Psoas muscle (tissue), 8 donors: ENCODE measurements at regions of chr5 and their contacts with region 1.

Region 1: GRCh38 chr5:137870647-137871339 is 3.1 kb downstream of the MYOT start:
- DNase-seq: peak in 1 of 2 donors; percentile 82
- ATAC-seq: peak; percentile 40 to 69 (median 58)
- H3K4me3 ChIP-seq: peak overlapping the region; percentile 73
- H3K27ac ChIP-seq: peak overlapping the region; percentile 89
- H3K4me1 ChIP-seq: peaks cover 32% of the 10 kb centered on the region
- H3K27me3 ChIP-seq: no peaks in the 10 kb centered on the region
- CTCF ChIP-seq: no peak

Region 2: DNA sequence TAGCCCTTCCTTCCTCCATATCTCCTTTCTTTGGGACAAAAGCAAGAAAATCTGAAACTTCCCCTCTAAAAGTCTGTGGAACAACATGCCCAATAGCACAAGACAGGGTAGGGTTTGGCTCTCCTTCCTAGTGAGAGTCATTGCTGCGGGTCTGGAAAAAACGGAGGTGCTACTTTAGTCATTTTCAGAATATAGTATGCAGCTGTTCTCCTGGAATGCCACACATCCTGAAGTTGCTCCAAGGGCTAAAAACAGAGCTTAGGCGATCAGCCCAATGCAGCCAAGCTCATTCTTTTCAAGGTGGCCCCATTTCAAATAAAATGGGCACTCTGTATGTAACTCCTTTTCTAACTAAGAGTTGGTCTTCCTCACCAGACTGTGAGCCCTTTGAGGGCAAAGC is 42.6 kb before region 1 on chr5:
- intact Hi-C with region 1: loop called in 1 of 2 experiments (anchors 2 kb)
- DNase-seq: peak in 1 of 2 donors; percentile 60
- ATAC-seq: peak; percentile 93 to 95 (median 95)
- H3K4me3 ChIP-seq: peak overlapping the region; percentile 37
- H3K27ac ChIP-seq: peak overlapping the region; percentile 94
- H3K4me1 ChIP-seq: peaks cover 32% of the 10 kb centered on the region
- H3K27me3 ChIP-seq: no peaks in the 10 kb centered on the region
- CTCF ChIP-seq: no peak

Region 3: GRCh38 chr5:137836997-137837396 is 33.8 kb before region 1 on chr5:
- intact Hi-C with region 1: loop called (anchors 2 to 5 kb)
- DNase-seq: no peak
- ATAC-seq: peak; percentile 79 to 83 (median 82)
- H3K4me3 ChIP-seq: peak overlapping the region; percentile 51
- H3K27ac ChIP-seq: peak overlapping the region; percentile 94
- H3K4me1 ChIP-seq: peaks cover 67% of the 10 kb centered on the region
- H3K27me3 ChIP-seq: no peaks in the 10 kb centered on the region
- CTCF ChIP-seq: no peak

Region 4: DNA sequence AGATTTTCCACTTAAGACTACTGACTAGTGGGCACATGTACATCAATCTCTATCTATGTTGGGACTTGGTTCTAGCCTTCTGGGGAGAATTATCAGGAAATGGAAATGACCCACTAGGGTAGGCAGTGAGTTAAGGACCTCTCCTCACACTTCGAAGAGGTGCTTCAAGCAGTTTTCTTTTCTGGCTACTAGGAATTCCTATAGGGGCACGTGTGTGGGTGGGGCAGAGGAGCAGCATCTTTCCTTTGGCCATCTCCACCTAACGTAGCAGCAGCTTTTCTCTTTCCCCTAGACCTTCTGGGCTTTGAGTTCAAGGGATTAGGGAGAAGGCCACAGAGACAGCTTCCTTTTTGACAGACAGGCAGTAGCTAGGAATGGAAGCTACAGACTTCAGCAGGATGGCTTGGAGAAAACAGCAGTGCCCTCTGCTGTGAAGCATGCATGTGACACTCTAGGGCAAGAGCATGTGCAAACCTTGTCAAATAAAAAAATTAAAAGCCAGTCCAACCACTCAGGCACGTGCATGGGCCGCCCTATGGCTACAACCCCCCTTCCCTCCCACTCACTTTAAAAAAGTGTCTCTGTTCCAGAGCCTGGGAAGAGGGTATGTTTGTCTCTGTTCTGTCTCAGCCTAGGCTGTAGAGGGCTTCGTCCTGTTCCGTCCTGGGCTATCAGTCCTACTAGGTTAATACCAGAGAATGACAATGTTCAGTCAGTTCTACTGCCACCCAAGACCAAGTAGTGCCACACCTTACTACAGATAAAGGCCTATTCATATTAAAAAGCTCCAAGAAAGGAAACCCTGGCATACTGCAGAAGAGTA is 412.3 kb after region 1 on chr5:
- intact Hi-C with region 1: no loop called
- DNase-seq: no peak
- ATAC-seq: peak in 3 of 4 donors; percentile 48 to 68 (median 56)
- H3K4me3 ChIP-seq: no peak overlapping the region
- H3K27ac ChIP-seq: no peak overlapping the region
- H3K4me1 ChIP-seq: no peaks in the 10 kb centered on the region
- H3K27me3 ChIP-seq: no peaks in the 10 kb centered on the region
- CTCF ChIP-seq: peak; percentile 44